K562 (cell line): ENCODE measurements at regions of chr17 and their contacts with region 1.

Region 1: GRCh38 chr17:40909351-40909750 is 24.3 kb upstream of the KRT20 start:
- DNase-seq: peak; percentile 73 to 83 (median 75)
- ATAC-seq: peak; percentile 96
- H3K4me3 ChIP-seq: no peak overlapping the region
- H3K27ac ChIP-seq: no peak overlapping the region
- H3K4me1 ChIP-seq: no peaks in the 10 kb centered on the region
- H3K27me3 ChIP-seq: peaks cover 32 to 37% of the 10 kb centered on the region in 2 experiments
- CTCF ChIP-seq: peak; percentile 83 to 92 (median 87)
- EP300 ChIP-seq: no peak
- POLR2A ChIP-seq: no peak
- RAD21 ChIP-seq: peak; percentile 92 to 93

Region 2: DNA sequence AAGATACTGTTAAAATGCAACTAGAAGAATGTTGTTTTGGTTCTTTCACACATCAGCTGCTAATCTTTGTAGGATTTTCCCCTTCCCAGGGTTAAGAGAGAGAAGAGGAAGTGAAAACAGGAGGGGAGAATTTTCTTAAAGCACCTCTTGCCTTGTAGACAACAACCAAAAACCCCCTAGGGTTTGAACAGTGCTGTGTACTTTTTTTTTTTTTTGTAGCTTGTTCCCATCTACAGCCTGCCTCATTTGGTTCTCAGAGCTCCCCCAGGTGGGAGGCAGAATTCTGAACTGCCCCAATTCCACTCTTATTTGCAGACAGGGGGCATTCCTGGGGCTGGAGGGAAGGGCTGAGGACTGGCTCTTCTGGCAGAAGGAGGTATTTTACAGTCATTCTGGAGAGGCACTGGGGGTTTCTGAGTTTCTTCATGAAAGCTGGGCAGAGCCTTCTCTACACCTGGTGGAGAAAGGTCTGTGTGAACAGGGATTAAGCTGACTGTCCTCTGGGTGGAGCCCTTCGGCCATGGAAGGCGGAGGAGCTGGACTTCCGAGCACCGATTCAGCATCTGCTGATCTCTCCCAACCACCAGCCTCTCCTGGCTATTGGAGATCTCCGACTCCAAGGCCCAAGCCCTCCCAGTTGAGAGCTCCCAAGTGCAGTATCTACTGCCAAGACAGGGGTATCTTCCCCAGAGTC is 293.9 kb before region 1 on chr17:
- CTCF ChIA-PET with region 1: interaction called, 3 read pairs
- POLR2A ChIA-PET with region 1: no interaction called
- in situ Hi-C with region 1: no loop called
- intact Hi-C with region 1: loop called (anchors 10 kb)
- DNase-seq: peak; percentile 52 to 75 (median 64)
- ATAC-seq: peak; percentile 92
- H3K4me3 ChIP-seq: no peak overlapping the region
- H3K27ac ChIP-seq: no peak overlapping the region
- H3K4me1 ChIP-seq: no peaks in the 10 kb centered on the region
- H3K27me3 ChIP-seq: peaks cover 11 to 55% of the 10 kb centered on the region in 2 experiments
- CTCF ChIP-seq: peak; percentile 80 to 83 (median 81)
- EP300 ChIP-seq: no peak
- POLR2A ChIP-seq: no peak
- RAD21 ChIP-seq: peak; percentile 56 to 82

Region 3: DNA sequence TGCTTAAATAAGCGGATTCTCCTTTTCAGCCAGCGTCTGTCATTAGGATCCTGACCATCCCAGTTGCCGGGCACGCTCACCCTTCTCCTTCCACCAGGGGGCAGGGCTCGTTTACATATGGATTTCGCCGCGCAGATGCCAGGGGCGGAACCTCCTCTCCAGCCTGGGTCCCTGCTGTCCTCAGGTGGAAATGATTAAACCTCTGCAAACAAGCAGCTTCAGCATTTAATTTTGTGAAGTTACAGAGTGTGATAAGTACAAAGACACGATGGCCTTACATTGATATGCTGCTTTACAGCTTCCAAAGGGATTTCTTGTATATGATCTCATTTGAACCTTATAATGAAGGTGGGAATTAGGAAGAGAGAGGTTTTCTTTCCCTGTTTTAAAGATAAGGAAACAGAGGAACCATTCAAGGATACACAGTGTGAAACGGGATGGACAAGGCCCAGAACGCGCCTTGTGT is 105.7 kb before region 1 on chr17:
- CTCF ChIA-PET with region 1: interaction called, 5 read pairs
- POLR2A ChIA-PET with region 1: no interaction called
- in situ Hi-C with region 1: loop called (anchors 10 kb)
- intact Hi-C with region 1: loop called (anchors 1 kb)
- DNase-seq: peak; percentile 85 to 88 (median 86)
- ATAC-seq: peak; percentile 98
- H3K4me3 ChIP-seq: no peak overlapping the region
- H3K27ac ChIP-seq: no peak overlapping the region
- H3K4me1 ChIP-seq: no peaks in the 10 kb centered on the region
- H3K27me3 ChIP-seq: peaks cover 3 to 14% of the 10 kb centered on the region in 2 experiments; a peak in 4 of 5 replicates
- CTCF ChIP-seq: peak; percentile 90 to 93 (median 93)
- EP300 ChIP-seq: no peak
- POLR2A ChIP-seq: no peak
- RAD21 ChIP-seq: peak; percentile 90 to 96

Region 4: DNA sequence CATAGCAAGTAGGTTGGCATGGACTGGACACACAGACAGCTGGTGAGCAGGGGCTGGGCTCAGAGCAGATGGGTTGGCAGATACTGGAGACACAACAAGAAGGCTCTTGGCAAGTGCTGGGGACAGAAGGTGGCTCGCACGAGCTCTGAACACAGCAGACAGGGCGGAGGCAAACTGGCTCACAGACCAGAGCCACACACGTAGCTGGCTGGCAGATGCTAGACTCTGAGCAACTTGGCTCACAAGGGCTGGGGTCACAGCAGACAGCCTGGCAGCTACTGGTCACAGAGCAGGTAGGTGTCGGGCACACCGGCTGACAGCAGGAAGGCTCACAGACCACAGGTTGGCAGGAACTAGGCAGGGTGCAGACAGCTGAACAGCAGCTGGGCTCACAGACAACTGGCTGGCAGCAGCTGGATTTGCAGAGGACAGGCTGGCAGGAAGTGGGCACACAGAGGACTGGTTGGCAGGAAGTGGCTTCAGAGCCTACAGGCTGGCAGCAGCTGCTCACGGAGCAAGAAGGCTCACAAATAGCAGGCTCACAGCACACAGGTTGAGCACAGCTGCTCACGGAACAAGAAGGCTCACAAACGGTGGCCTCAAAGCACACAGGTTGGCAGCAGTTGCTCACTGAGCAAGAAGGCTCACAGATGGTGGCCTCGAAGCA is 399.0 kb after region 1 on chr17:
- CTCF ChIA-PET with region 1: no interaction called
- POLR2A ChIA-PET with region 1: no interaction called
- in situ Hi-C with region 1: no loop called
- intact Hi-C with region 1: no loop called
- DNase-seq: no peak
- ATAC-seq: no peak
- H3K4me3 ChIP-seq: no peak overlapping the region
- H3K27ac ChIP-seq: no peak overlapping the region
- H3K4me1 ChIP-seq: no peaks in the 10 kb centered on the region; a peak in 1 of 5 replicates
- H3K27me3 ChIP-seq: peaks cover 3 to 21% of the 10 kb centered on the region in 2 experiments; a peak in 4 of 5 replicates
- CTCF ChIP-seq: no peak
- EP300 ChIP-seq: no peak
- POLR2A ChIP-seq: no peak
- RAD21 ChIP-seq: no peak

Region 5: GRCh38 chr17:41329281-41329948 is 420.1 kb after region 1 on chr17:
- CTCF ChIA-PET with region 1: interaction called, 4 read pairs
- POLR2A ChIA-PET with region 1: no interaction called
- in situ Hi-C with region 1: no loop called
- intact Hi-C with region 1: loop called (anchors 5 kb)
- DNase-seq: peak; percentile 31 to 39 (median 35)
- ATAC-seq: peak; percentile 85
- H3K4me3 ChIP-seq: no peak overlapping the region
- H3K27ac ChIP-seq: no peak overlapping the region
- H3K4me1 ChIP-seq: no peaks in the 10 kb centered on the region
- H3K27me3 ChIP-seq: peaks cover 0 to 9% of the 10 kb centered on the region in 2 experiments; a peak in 1 of 5 replicates
- CTCF ChIP-seq: peak; percentile 66 to 70 (median 68)
- EP300 ChIP-seq: no peak
- POLR2A ChIP-seq: no peak
- RAD21 ChIP-seq: peak; percentile 50 to 62

Region 6: GRCh38 chr17:41496820-41497408 is 587.6 kb after region 1 on chr17:
- CTCF ChIA-PET with region 1: interaction called, 3 read pairs
- POLR2A ChIA-PET with region 1: no interaction called
- in situ Hi-C with region 1: no loop called
- intact Hi-C with region 1: loop called (anchors 10 kb)
- DNase-seq: peak; percentile 88 to 91 (median 90)
- ATAC-seq: peak; percentile 92
- H3K4me3 ChIP-seq: no peak overlapping the region
- H3K27ac ChIP-seq: no peak overlapping the region
- H3K4me1 ChIP-seq: peaks cover 48 to 53% of the 10 kb centered on the region in 2 experiments
- H3K27me3 ChIP-seq: no peaks in the 10 kb centered on the region
- CTCF ChIP-seq: peak; percentile 88 to 99 (median 97)
- EP300 ChIP-seq: no peak
- POLR2A ChIP-seq: no peak; the same call in 1 of the 2 replicates
- RAD21 ChIP-seq: peak; percentile 67 to 86

Region 7: GRCh38 chr17:41648411-41649195 is 739.3 kb after region 1 on chr17:
- CTCF ChIA-PET with region 1: interaction called, 24 read pairs
- POLR2A ChIA-PET with region 1: no interaction called
- in situ Hi-C with region 1: no loop called
- intact Hi-C with region 1: loop called (anchors 5 kb)
- DNase-seq: peak; percentile 86 to 89 (median 86)
- ATAC-seq: peak; percentile 96
- H3K4me3 ChIP-seq: peak overlapping the region; percentile 23
- H3K27ac ChIP-seq: no peak overlapping the region; the same call in 2 of the 3 replicates
- H3K4me1 ChIP-seq: peaks cover 20 to 31% of the 10 kb centered on the region in 2 experiments; a peak in 4 of 5 replicates
- H3K27me3 ChIP-seq: peaks cover 0 to 4% of the 10 kb centered on the region in 2 experiments; a peak in 1 of 5 replicates
- CTCF ChIP-seq: peak; percentile 85 to 95 (median 93)
- EP300 ChIP-seq: no peak
- POLR2A ChIP-seq: no peak
- RAD21 ChIP-seq: peak; percentile 39 to 71